ENCODE measurements at regions of chr20 and their contacts with region 1.

Region 1: DNA sequence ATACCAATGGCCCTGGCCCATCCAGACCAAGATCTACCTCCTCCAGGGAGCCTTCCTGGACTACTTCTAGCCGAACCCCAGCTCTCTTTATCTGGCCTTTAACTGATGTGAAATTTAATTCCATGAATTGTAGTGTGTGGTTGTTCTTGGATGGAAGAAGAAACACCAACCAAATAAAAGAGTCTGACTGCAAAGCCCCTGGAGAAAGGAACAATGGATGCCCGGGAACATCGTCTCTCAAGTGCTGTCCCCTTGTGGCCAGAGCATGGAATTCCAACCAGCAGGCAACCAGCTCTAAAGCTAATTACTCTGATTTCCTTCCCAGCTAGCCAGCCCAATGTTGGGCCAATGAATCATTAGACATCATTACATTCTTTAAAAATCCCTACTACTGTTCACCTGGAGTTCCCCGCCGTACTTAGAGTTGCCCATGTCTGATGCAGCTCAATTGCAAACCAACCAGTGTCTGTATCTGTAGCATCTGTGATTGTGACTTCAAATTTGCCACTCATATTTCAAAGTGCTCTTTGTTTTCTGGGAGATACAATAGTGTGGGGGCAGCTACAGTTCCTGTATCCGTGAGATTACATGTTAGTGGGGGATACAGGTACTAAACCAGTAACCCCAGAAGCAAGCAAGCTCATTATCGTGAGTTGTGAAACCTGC is 141.1 kb downstream of the ANKRD60 start:
- DNase-seq: peak; percentile 23
- ATAC-seq: no peak
- H3K4me3 Mint-ChIP-seq: no peak overlapping the region
- H3K27ac Mint-ChIP-seq: no peak overlapping the region
- H3K4me1 Mint-ChIP-seq: no peaks in the 10 kb centered on the region
- H3K27me3 Mint-ChIP-seq: peaks cover 11% of the 10 kb centered on the region
- CTCF ChIP-seq: peak; percentile 80

Region 2: DNA sequence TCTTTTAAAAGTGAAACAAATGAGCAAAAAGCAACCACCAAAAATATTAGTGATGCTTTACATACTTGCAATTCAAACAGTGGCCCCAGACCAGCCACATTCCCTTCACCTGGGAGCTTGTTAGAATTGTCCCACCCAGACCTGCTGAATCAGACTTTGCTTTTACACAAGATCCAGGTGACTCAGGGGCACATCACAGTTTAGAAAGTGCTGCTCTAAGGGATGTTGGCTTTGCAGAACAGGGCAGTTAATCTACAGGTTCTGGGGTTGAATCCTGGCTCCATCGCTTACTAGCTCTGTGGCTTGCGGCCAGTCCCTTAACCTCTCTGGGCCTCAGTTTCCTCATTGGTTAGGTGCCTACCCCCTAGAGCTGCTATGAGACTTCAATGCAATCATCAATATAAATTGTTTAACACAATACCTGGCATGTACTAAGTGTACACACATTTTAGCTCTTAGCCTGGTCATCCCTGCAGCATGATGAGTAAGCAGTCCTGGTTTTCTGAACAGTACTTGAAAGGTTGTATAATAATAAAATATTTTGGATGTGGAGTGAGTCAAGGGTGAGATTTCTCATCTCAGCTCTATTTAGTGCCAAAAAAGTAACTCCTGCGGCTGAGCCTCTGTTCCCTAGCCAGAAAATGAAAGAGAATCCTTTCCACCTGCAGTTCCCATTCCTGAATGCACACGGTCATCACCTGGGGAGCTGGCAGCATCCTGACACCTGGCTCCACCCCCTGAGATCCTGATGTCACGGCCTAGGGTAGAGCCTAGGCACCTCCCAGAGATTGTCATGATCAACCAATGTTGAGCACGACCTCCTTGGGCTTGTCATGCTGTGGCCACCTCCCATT is 21.6 kb before region 1 on chr20:
- CTCF ChIA-PET with region 1: interaction called, 16 read pairs
- POLR2A ChIA-PET with region 1: no interaction called
- intact Hi-C with region 1: no loop called
- DNase-seq: no peak
- ATAC-seq: no peak
- H3K4me3 Mint-ChIP-seq: no peak overlapping the region
- H3K27ac Mint-ChIP-seq: no peak overlapping the region
- H3K4me1 Mint-ChIP-seq: no peaks in the 10 kb centered on the region
- H3K27me3 Mint-ChIP-seq: no peaks in the 10 kb centered on the region
- CTCF ChIP-seq: no peak

Region 3: GRCh38 chr20:58102260-58102659 is 14.9 kb after region 1 on chr20:
- CTCF ChIA-PET with region 1: interaction called, 15 read pairs
- POLR2A ChIA-PET with region 1: no interaction called
- intact Hi-C with region 1: no loop called
- DNase-seq: no peak
- ATAC-seq: no peak
- H3K4me3 Mint-ChIP-seq: no peak overlapping the region
- H3K27ac Mint-ChIP-seq: no peak overlapping the region
- H3K4me1 Mint-ChIP-seq: peaks cover 1% of the 10 kb centered on the region
- H3K27me3 Mint-ChIP-seq: peaks cover 22% of the 10 kb centered on the region
- CTCF ChIP-seq: no peak